Left ventricle myocardium superior (tissue), 1 donor: ENCODE measurements at regions of chr12 and their contacts with region 1.

Region 1: DNA sequence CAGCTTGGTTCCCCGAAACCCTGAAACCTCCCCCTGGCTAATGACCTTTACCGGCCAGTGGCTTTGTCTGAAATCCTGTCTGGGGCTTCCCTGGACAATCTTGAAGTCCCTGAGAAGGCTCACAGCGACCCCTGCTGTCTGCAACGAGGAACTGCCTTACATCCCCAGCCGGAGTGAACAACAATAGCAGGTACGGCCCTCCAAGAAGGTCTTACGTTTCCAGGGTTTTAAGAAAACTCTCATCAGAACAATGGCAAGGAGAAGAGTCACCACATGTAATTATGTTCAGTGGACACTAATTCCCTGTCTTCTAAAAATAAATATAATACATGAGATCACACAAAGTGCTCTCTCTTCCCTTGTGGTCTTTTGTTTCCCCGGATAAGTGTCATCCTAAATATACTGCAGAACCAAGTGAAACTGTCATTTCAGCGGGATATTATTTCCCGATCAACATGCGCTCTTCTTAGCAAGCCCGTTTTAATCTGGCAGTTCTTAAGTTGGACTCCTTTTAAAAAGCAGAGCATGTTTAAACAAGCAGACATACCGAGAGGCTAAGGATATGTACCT is 53.3 kb downstream of the RBM19 start:
- DNase-seq: peak; percentile 73
- ATAC-seq: peak; percentile 78

Region 2: DNA sequence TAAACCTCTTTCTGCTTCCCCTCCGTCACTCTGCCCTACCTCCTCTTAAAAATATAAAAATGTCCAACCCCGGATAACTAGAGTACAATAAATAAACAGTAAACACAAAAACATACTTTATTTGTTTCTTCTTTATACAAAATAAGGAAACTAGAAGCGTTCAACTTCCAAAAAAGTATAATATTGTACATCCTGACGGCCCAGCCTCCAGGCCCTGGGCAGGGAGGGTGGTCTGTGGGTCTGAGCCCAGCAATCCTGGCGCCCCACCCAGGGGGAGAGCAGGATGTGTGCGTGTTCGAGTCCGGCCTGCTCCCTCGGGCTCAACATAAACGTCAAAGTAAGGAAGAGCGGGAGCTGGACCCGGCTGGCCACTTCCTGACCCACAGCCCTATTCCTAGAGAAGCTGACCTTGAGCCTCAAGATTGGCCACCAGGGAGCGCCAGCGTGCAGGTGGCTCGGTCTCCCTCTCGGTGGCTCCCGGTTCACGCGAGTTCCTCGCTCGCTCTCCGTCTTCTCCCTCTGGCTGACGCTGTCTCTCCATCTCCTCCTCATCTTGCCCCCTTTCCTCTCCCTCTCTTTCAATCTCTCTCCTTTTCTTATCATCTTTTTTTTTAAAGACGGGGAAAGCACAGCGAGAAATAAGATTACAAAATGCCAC is 450.6 kb before region 1 on chr12:
- intact Hi-C with region 1: loop called (anchors 5 kb)
- DNase-seq: peak; percentile 90
- ATAC-seq: peak; percentile 92

Region 3: GRCh38 chr12:114823724-114824123 is 910.9 kb after region 1 on chr12:
- intact Hi-C with region 1: no loop called
- DNase-seq: no peak
- ATAC-seq: no peak